ENCODE measurements at regions of chr17 and their contacts with region 1.

Region 1: GRCh38 chr17:2532146-2532720 is 20.5 kb upstream of the METTL16 start:
- DNase-seq: no peak
- H3K4me3 ChIP-seq: no peak overlapping the region
- H3K27ac ChIP-seq: no peak overlapping the region
- H3K4me1 ChIP-seq: no peaks in the 10 kb centered on the region
- H3K27me3 ChIP-seq: no peaks in the 10 kb centered on the region
- CTCF ChIP-seq: no peak

Region 2: GRCh38 chr17:2331303-2331702 is 200.9 kb before region 1 on chr17:
- CTCF ChIA-PET with region 1: no interaction called
- POLR2A ChIA-PET with region 1: interaction called, 15 read pairs
- intact Hi-C with region 1: no loop called
- DNase-seq: no peak
- H3K4me3 ChIP-seq: no peak overlapping the region
- H3K27ac ChIP-seq: no peak overlapping the region
- H3K4me1 ChIP-seq: peaks cover 16% of the 10 kb centered on the region; the same call in 1 of the 2 replicates
- H3K27me3 ChIP-seq: no peaks in the 10 kb centered on the region
- CTCF ChIP-seq: no peak

Region 3: GRCh38 chr17:2547176-2547575 is 14.9 kb after region 1 on chr17:
- CTCF ChIA-PET with region 1: no interaction called
- POLR2A ChIA-PET with region 1: no interaction called
- intact Hi-C with region 1: no loop called
- DNase-seq: no peak
- H3K4me3 ChIP-seq: no peak overlapping the region
- H3K27ac ChIP-seq: no peak overlapping the region
- H3K4me1 ChIP-seq: 0 out of 2 replicates have a peak, but pooled peaks cover 8% of the 10 kb centered on the region
- H3K27me3 ChIP-seq: no peaks in the 10 kb centered on the region
- CTCF ChIP-seq: no peak

Region 4: DNA sequence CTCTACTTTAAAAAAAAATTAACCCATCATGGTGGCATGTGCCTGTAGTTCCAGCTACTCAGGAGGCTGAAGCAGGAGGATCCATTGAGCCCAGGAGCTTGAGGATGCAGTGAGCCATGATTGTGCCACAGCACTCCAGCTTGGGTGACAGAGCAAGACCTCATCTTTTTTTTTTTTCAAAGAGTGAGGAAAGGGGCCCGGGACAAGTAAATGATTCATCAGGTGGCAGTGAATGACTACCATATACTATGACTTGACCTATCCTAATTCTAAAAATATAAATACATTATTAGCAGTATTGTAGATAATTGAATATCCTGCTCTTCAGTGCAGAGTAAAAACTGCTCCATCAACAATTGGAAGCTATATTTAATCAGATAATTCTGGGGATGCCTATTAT is 124.0 kb after region 1 on chr17:
- CTCF ChIA-PET with region 1: no interaction called
- POLR2A ChIA-PET with region 1: interaction called, 10 read pairs
- intact Hi-C with region 1: no loop called
- DNase-seq: no peak
- H3K4me3 ChIP-seq: no peak overlapping the region
- H3K27ac ChIP-seq: no peak overlapping the region
- H3K4me1 ChIP-seq: peaks cover under 1% of the 10 kb centered on the region
- H3K27me3 ChIP-seq: no peaks in the 10 kb centered on the region
- CTCF ChIP-seq: no peak

Measured in PC-9 (cell line).